WTC11 (cell line): ENCODE measurements at regions of chr15 and their contacts with region 1.

Region 1: GRCh38 chr15:68997930-68998777 is 16.3 kb upstream of the NOX5 start:
- DNase-seq: no peak
- ATAC-seq: no peak
- H3K4me3 Mint-ChIP-seq: no peak overlapping the region
- H3K27ac Mint-ChIP-seq: no peak overlapping the region
- H3K4me1 Mint-ChIP-seq: peaks cover 48% of the 10 kb centered on the region
- H3K27me3 Mint-ChIP-seq: no peaks in the 10 kb centered on the region
- CTCF ChIP-seq: no peak

Region 2: DNA sequence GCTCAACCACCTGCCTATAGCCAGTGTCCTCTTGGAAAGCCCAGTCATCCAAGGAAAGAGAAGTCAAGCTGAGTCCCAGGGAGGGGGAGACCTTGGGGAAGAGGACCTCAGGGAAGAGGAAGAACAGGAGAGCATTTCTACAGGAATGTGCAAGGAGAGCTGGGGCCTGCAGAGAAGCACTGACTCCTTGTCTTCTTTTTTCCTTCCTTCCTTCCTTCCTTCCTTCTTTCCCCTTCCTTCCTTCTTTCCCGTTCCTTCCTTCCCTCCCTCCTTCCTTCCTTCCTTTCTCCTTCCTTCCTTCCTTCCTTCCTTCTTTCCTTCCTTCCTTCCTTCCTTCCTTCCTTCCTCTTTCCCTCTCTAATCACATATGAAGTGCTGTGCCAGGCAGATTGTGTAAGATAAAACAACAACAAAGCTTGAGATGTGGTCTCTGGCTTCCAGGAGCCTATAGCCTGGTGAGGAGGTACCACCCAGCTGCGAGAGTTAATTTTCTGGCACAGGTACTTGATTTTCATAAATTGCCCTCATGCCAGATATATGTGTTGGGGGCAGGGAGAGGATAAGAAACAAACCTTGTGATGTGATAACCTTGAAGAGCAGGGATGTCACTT is 86.4 kb after region 1 on chr15:
- CTCF ChIA-PET with region 1: no interaction called
- POLR2A ChIA-PET with region 1: interaction called, 12 read pairs
- DNase-seq: no peak
- ATAC-seq: no peak
- H3K4me3 Mint-ChIP-seq: no peak overlapping the region
- H3K27ac Mint-ChIP-seq: no peak overlapping the region
- H3K4me1 Mint-ChIP-seq: peaks cover 90% of the 10 kb centered on the region
- H3K27me3 Mint-ChIP-seq: peaks cover 16% of the 10 kb centered on the region
- CTCF ChIP-seq: no peak

Region 3: DNA sequence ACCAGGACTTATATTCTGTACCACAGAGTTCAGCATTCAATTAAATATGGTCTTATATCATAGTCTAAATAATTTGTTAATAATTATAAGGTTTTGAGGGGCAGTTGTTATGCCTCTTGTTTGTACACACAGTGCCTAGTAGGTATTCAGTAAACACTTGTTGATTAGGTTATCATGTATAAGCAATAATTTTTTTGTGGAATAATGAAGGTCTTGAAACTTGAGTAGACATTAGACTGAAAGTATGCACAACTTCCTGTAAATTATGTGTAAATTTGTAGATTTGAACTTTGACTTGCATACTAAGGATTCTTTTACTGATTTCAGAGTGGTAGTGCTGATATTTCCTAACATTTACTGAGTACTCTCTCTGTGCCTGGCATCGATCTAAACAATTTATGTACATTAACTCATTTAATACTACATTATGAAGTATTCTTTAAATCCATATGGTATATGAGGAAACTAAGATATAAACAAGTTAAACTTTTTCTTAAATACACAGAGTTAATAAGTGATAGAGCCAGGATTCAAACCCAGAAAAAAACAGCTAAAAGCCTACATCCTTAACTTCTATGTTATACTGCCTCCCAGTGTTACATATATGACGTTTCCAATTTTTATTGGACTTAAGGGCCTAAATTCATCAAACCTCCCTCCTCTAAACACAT is 227.3 kb after region 1 on chr15:
- CTCF ChIA-PET with region 1: no interaction called
- POLR2A ChIA-PET with region 1: no interaction called
- DNase-seq: no peak
- ATAC-seq: 0 out of 2 replicates have a peak, but pooled peaks have one; percentile 38
- H3K4me3 Mint-ChIP-seq: no peak overlapping the region
- H3K27ac Mint-ChIP-seq: no peak overlapping the region
- H3K4me1 Mint-ChIP-seq: peaks cover 15% of the 10 kb centered on the region
- H3K27me3 Mint-ChIP-seq: no peaks in the 10 kb centered on the region
- CTCF ChIP-seq: no peak